Posterior cingulate gyrus (tissue), 11 donors: ENCODE measurements at regions of chr2 and their contacts with region 1.

Region 1: GRCh38 chr2:42828487-42829425 is 36.4 kb upstream of the HAAO start:
- DNase-seq: peak; percentile 49 to 96 (median 73)

Region 2: DNA sequence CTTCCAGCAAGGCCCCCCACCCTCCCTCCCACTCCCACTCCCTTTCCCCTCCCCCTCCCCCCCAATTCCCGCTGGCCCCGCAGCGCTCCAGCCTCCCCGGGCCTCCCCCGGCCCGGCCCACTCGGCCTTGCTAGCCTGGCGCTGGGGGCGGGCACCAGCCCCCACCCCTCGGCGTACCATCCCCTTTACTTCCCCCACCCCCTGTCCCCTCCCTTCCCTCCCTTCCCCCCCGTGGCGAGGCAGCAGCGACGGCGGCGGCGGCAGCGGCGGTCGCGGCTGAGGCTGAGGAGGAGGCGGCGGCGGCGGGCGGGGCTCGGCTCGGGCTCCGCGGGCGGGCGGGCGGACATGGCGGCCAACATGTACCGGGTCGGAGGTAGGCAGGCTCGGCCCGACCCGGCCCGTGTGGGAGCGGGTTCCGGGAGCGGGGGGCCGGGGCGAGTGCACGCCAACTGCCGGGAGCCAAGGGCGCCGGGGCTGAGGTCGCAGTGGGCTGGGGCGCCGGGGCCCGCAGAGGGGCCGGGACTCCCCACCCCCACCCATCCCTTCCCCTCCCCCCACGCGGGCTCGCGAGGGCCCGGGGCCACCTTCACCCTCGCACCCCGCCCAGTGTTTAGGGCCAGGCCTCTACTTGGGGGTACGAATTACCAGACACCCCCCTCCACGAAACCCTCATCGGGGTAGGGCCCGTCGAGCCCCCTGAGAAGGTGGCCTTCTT is 260.2 kb before region 1 on chr2 and contains the start of gene MTA3:
- intact Hi-C with region 1: no loop called
- DNase-seq: peak; percentile 49 to 95 (median 72)

Region 3: DNA sequence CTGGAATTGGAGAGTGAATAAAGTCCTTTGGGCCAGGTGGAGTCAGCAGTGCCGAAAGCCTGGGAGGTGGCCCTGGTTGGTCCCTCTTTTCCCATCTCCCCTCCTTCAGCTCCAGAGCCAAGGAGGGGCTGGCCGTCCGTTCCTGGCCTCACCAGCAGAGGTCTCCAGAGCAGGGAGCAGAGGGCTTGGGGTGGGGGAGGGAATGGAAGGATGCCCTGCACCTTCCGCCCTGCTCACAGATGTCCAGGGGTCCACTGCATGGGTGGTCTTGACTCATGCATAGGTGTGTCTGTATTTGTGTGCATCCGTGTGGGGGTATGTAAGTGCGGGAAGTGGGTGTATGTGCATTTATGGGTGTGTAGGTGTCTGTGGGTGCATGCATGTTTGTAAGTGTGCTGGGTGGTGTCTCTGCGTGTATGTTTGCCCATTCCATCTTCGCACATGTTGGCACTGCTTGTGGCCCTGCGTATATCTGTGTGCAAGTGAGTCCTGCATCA is 195.8 kb after region 1 on chr2:
- intact Hi-C with region 1: loop called (anchors 5 kb)
- DNase-seq: peak; percentile 46 to 93 (median 77)

Region 4: GRCh38 chr2:43484323-43484930 is 655.7 kb after region 1 on chr2:
- intact Hi-C with region 1: loop called (anchors 5 kb)
- DNase-seq: no peak

Region 5: GRCh38 chr2:43576981-43577892 is 748.5 kb after region 1 on chr2:
- intact Hi-C with region 1: loop called (anchors 10 kb)
- DNase-seq: peak in 1 of 10 donors; percentile 8